ENCODE measurements at regions of chr2 and their contacts with region 1.

Region 1: DNA sequence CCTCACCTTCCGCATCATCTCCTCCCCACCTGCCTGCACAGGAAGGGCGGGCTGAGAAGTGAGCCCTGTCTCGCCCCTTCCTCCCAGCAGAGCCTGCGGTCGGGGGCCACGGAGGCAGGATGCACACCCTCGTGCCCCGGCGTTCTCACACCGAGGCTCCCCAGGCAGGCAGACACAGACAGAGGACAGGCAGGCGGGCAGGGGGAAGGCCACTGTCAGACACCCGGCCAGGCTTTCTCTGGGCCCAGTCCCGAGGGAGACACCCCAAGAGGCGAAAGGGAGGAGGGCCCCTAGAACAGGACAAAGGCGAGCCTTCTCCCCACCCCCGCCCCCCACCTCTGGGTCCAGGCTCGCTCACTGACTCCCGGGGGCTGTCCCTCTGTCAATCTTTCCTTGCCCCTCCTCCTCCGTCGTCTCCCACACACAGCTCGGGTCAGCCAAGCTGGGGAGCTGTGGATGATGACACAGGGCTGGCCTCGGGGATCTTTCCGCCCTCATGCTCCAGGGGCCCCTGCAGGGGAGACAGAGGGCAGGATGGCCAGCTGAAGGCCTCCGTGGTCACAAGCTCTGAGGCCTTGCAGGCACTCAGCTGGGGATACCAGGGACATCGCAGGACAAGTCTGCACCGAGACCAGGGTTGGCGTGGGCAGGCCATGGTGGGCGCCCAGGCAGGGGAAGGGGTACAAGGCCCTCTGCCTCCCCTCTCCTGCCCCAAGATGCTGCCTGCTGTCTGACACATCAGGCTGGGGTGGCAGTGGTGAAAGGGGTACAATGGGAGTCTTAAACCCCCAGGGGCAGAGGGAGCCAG is 24.9 kb downstream of the BIN1 start:
- DNase-seq: peak; percentile 87
- H3K4me3 Mint-ChIP-seq: peak overlapping the region; percentile 87
- H3K27ac Mint-ChIP-seq: peak overlapping the region; percentile 95
- H3K4me1 Mint-ChIP-seq: peaks cover 74% of the 10 kb centered on the region
- H3K27me3 Mint-ChIP-seq: no peaks in the 10 kb centered on the region

Region 2: DNA sequence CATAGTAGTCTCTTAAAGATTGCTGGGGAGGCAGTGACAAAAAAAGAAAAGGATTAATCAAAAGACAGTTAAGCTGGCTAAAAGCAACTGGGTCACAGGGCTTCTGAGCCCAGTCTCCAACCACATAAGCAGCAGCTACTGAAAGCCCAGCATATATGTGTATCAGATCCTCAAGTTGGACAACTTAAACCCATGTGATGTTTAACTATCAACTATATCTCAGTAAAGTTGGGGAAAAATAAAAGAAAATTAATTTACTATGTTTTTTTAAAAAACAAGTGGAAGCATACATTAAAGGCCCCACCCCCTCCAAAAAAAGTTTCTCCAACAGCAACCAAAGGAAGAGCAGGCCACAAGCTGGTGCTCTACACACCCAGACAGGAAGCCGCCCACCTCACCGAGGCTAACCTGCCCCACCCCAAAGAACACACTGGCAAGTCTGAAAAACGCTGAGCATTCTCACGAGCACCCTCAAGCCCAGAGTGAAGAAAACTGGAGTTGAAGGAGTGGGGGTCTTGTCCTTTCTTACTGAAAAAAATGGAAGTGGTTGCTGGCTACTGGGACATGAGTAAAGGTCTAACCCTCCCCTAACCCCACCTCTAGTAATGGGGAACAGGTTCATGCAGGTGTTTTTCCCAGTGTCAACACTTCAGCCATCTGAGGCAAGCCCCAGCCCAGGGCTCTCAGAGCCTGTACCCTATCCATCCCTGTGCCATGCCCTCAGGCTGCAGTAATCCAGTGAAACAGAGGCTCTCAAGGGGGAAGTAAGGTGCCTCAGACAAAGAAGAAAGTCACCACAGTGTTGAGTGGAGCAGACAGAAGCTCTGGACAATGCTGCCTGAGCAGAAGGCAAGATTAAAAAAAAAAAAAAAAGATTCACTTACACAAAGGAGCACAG is 319.8 kb before region 1 on chr2:
- CTCF ChIA-PET with region 1: no interaction called
- POLR2A ChIA-PET with region 1: no interaction called
- DNase-seq: peak; percentile 78
- H3K4me3 Mint-ChIP-seq: peak overlapping the region; percentile 26
- H3K27ac Mint-ChIP-seq: peak overlapping the region; percentile 78
- H3K4me1 Mint-ChIP-seq: peaks cover 39% of the 10 kb centered on the region
- H3K27me3 Mint-ChIP-seq: peaks cover 19% of the 10 kb centered on the region

Region 3: DNA sequence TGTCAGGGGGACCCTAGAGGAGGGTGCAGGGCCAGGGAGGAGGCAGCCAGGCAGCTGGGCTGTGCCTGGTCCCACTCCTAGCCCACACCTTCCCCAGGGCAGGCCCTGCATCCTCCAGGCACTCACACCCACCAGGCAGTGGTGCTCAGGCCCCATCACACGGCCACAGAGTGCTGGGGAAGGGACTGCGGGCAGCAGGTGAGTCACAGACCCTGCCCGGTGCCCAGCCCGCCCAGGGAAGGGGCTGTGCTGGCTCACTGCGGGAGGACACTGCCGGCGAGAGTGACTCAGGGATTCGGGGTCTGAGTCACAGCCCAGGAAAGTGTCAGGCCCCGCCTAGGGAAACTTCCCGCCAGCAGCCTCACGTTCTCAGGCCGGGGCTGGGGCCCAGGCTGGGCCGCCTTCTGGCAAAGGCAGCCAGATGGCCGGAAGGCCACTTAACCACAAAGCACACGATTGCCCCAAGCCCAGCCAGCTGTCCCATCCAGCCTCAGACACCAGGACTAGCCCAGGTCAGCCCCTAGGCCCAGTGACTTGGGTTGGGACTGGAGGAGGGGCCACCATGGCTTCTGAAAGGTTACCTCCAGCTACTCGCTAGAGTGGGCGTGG is 17.3 kb before region 1 on chr2:
- CTCF ChIA-PET with region 1: interaction called, 59 read pairs
- POLR2A ChIA-PET with region 1: interaction called, 23 read pairs
- DNase-seq: peak; percentile 86
- H3K4me3 Mint-ChIP-seq: no peak overlapping the region
- H3K27ac Mint-ChIP-seq: peak overlapping the region; percentile 69
- H3K4me1 Mint-ChIP-seq: peaks cover 36% of the 10 kb centered on the region
- H3K27me3 Mint-ChIP-seq: no peaks in the 10 kb centered on the region

Region 4: GRCh38 chr2:127106951-127107621 is 25.1 kb after region 1 on chr2 and contains the start of gene BIN1:
- CTCF ChIA-PET with region 1: no interaction called
- POLR2A ChIA-PET with region 1: interaction called, 26 read pairs
- DNase-seq: peak; percentile 80
- H3K4me3 Mint-ChIP-seq: peak within 1 kb of the TSS; percentile 69
- H3K27ac Mint-ChIP-seq: no peak within 1 kb of the TSS
- H3K4me1 Mint-ChIP-seq: peaks cover 7% of the 10 kb centered on the region
- H3K27me3 Mint-ChIP-seq: peaks cover 33% of the 10 kb centered on the region
- total RNA-seq, gene BIN1: 130 to 131 TPM

Region 5: GRCh38 chr2:127143841-127144782 is 62.1 kb after region 1 on chr2:
- CTCF ChIA-PET with region 1: no interaction called
- POLR2A ChIA-PET with region 1: no interaction called
- DNase-seq: no peak
- H3K4me3 Mint-ChIP-seq: no peak overlapping the region
- H3K27ac Mint-ChIP-seq: no peak overlapping the region
- H3K4me1 Mint-ChIP-seq: no peaks in the 10 kb centered on the region
- H3K27me3 Mint-ChIP-seq: peaks cover 18% of the 10 kb centered on the region